Activated CD4-positive, alpha-beta T cell treated with anti-CD3 and anti-CD28 coated beads for 36 hours (primary cell): ENCODE measurements at regions of chr11 and their contacts with region 1.

Region 1: DNA sequence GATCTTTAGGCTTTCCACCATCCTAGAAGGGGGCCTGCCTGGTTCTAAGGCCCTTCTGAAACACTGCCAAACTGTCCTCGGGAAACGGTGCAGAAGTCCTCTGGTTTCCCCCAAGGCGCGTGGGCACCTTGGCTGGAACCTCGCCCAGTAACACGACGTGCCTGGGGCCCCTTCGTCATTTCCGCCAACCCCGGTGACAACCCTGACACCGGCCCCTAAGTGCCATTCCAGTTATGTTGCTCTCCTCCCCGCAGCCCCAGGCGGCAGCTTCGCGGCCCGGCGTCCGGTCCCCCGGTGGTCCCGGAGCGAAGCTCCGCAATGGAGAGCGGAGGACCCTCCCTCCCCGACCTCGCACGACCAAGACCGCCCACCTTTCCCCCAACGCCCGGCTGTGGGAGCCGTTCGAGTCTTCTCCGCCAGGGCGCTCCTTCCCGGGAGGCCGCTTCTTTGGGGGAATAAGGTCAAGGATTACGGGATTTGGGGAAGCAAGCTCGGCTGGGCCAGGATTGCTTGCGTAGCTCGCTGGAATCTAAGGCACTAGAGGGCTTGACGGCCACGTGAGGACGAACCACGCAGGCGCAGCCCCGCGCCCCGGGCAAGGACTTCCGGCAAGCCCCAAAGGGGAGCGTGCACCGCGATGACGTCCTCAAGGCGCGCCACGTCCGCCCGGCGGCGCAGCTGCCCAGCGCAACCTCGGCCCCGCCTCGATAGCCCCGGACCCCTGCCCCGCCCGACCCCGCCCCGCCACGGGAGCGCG is 626 bp downstream of the RNH1 start:
- DNase-seq: peak; percentile 99
- ATAC-seq: peak; percentile 78
- H3K4me3 Mint-ChIP-seq: peak overlapping the region; percentile 93
- H3K27ac Mint-ChIP-seq: peak overlapping the region; percentile 99
- H3K4me1 Mint-ChIP-seq: peaks cover 22% of the 10 kb centered on the region
- H3K27me3 Mint-ChIP-seq: no peaks in the 10 kb centered on the region

Region 2: GRCh38 chr11:207208-207862 is 299.1 kb before region 1 on chr11 and contains the starts of genes BET1L and RIC8A:
- CTCF ChIA-PET with region 1: no interaction called
- POLR2A ChIA-PET with region 1: interaction called, 4 read pairs
- intact Hi-C with region 1: loop called in 1 of 2 experiments (anchors 1 kb)
- DNase-seq: peak; percentile 99
- ATAC-seq: peak; percentile 89
- H3K4me3 Mint-ChIP-seq: peak within 1 kb of the TSS; percentile 94
- H3K27ac Mint-ChIP-seq: peak within 1 kb of the TSS; percentile 99
- H3K4me1 Mint-ChIP-seq: peaks cover 56% of the 10 kb centered on the region
- H3K27me3 Mint-ChIP-seq: no peaks in the 10 kb centered on the region
- total RNA-seq, gene BET1L: 45.5 to 49.4 TPM
- total RNA-seq, gene RIC8A: 104 to 124 TPM

Region 3: GRCh38 chr11:355581-356458 is 150.6 kb before region 1 on chr11:
- CTCF ChIA-PET with region 1: no interaction called
- POLR2A ChIA-PET with region 1: no interaction called
- intact Hi-C with region 1: loop called in 1 of 2 experiments (anchors 1 kb)
- DNase-seq: peak; percentile 94
- ATAC-seq: peak; percentile 63
- H3K4me3 Mint-ChIP-seq: no peak overlapping the region
- H3K27ac Mint-ChIP-seq: peak overlapping the region; percentile 96
- H3K4me1 Mint-ChIP-seq: peaks cover 47% of the 10 kb centered on the region
- H3K27me3 Mint-ChIP-seq: no peaks in the 10 kb centered on the region

Region 4: GRCh38 chr11:518463-519250 is 12.2 kb after region 1 on chr11:
- CTCF ChIA-PET with region 1: interaction called, 9 read pairs
- POLR2A ChIA-PET with region 1: interaction called, 4 read pairs
- intact Hi-C with region 1: loop called (anchors 1 kb)
- DNase-seq: peak; percentile 94
- ATAC-seq: peak; percentile 95
- H3K4me3 Mint-ChIP-seq: peak overlapping the region; percentile 67
- H3K27ac Mint-ChIP-seq: peak overlapping the region; percentile 85
- H3K4me1 Mint-ChIP-seq: peaks cover 3% of the 10 kb centered on the region
- H3K27me3 Mint-ChIP-seq: no peaks in the 10 kb centered on the region

Region 5: DNA sequence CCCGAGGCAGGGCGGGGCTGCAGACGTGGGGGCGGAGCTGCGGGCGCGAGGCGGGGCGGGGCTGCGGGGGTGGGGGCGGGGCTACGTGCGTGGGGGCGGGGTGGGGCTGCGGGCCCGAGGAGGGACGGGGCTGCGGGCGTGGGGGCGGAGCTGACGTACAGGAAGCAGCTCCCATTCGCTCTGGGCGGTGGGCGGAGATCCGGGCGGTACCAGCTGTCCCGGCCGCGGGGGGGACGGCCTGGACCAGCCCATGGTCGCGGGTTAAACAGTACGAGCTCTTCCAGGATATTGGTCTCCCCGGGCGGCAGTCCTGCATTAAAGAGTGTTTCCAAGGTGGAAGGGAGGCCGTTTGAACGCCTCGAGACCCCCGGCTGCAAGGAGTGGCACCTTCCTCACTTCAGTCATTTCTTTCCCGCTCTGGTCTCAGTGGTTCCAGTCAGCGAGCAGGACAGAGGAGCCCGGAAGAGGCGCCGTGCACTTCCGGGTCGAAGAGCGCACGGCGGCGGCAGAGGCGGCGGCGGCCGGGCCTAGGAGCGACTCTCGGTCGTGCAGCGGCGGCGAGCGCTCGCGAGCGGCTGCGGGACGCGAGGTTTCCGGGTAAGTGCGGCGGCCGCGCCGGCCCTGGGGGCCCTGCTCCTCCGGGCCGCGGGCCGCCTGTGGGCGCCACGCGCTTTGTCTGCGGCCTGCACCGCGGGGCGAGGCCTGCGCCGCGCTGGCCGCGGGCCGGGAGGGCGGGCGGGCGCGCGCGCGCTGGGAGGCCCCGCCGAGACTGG is 69.8 kb after region 1 on chr11 and contains the start of gene PHRF1:
- CTCF ChIA-PET with region 1: interaction called, 3 read pairs
- POLR2A ChIA-PET with region 1: no interaction called
- intact Hi-C with region 1: loop called in 1 of 2 experiments (anchors 1 kb)
- DNase-seq: peak; percentile 98
- ATAC-seq: peak; percentile 89
- H3K4me3 Mint-ChIP-seq: peak within 1 kb of the TSS; percentile 86
- H3K27ac Mint-ChIP-seq: peak within 1 kb of the TSS; percentile 98
- H3K4me1 Mint-ChIP-seq: peaks cover 49% of the 10 kb centered on the region
- H3K27me3 Mint-ChIP-seq: peaks cover 10% of the 10 kb centered on the region
- total RNA-seq, gene PHRF1: 40.0 to 44.5 TPM

Region 6: DNA sequence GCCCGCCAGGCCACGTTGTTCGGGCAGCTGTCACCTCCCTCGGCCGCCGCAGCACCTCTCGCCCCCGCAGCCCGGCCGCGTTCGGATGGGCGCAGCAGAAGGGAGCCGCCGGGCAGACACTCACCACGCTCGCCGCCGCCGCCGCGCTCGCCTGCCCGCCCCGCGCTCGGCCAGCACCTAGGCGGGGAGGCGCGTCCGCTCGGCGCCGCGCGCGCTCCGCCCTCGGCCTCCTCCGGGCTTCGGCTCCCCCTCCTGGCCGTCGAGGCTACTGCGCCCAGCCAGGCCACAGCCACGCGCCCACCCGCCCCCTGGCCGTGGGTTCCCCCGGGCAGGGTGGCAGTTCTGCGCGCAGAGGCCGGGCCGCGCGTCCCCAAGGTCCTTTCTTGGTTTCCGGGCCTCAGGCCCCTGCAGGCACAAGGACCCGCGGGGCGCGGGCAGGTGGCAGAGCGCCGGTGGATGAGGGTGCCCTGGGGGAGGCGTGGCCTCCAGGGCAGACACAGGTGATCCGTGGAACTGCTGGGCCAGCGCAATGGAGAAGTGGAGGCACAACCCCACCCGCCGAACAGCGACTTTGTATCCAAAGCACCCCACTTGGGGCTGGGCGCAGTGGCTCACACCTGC is 291.8 kb after region 1 on chr11 and contains the start of gene SLC25A22:
- CTCF ChIA-PET with region 1: no interaction called
- POLR2A ChIA-PET with region 1: no interaction called
- intact Hi-C with region 1: loop called in 1 of 2 experiments (anchors 1 kb)
- DNase-seq: peak; percentile 92
- ATAC-seq: peak; percentile 63
- H3K4me3 Mint-ChIP-seq: peak within 1 kb of the TSS; percentile 79
- H3K27ac Mint-ChIP-seq: peak within 1 kb of the TSS; percentile 67
- H3K4me1 Mint-ChIP-seq: peaks cover 13% of the 10 kb centered on the region
- H3K27me3 Mint-ChIP-seq: no peaks in the 10 kb centered on the region
- total RNA-seq, gene SLC25A22: 33.9 to 36.6 TPM